Astrocyte of the cerebellum (primary cell): ENCODE measurements at regions of chr4 and their contacts with region 1.

Region 1: DNA sequence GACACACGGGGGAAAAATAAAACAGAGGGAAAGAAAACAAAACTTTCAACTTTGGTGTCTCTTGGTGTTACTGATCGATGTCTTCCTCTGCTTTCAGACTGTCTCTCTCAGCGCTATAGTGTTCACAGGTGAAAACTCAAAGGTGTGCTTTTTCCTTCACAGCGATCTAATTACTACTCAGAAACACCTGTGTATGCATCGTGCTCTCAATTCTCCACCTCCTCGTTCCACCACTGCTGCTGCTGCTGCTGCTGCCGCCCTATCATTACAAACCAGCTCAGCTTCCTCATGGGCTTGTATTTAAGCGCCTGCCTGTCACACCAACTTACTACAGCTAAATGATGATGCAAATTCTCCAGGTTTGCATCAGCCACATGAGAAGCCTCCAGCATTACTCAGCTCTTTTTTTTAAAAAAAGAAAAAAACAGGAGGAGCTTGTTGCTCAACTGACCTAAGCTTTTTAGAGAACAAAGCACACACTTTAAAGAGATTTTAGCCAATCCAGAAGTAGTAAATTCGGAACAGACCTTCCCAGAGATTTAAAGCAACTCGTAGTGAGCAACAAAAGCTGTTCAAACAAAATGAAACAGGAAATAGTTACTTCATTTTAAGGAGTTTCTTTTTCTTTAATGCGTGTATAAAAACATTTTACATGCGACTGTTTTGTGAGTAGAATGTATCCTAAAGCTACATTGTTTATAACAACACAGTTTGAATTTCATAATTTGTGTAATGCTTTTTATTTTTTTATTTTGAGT is at the start of gene SLC7A11:
- DNase-seq: peak; percentile 92
- H3K4me3 ChIP-seq: peak within 1 kb of the TSS; percentile 44
- CTCF ChIP-seq: no peak

Region 2: DNA sequence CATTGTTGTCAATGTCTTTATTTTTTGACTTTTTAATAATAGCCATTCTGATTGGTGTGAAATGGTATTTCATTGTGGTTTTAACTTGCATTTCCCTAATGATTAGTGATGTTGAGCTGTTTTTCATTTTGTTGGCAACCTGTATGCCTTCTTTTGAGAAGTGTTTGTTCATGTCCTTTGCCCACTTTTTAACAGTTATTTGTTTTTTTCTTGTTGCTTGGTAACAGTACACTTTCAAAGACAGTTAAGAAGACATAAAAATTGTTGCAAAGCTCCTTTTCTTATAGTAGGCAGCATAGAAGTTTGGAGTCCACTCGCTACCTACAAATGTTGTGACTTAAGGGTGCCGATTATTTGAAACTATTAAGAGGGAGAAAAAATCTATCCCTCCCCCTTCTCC is 48.5 kb after region 1 on chr4:
- in situ Hi-C with region 1: no loop called
- DNase-seq: no peak
- H3K4me3 ChIP-seq: no peak overlapping the region
- CTCF ChIP-seq: no peak

Region 3: GRCh38 chr4:138948918-138949317 is 706.7 kb after region 1 on chr4:
- in situ Hi-C with region 1: loop called (anchors 10 kb)
- DNase-seq: no peak
- H3K4me3 ChIP-seq: no peak overlapping the region
- CTCF ChIP-seq: no peak